ENCODE measurements at regions of chrX and their contacts with region 1.

Region 1: GRCh38 chrX:138745196-138745595 is 33.7 kb upstream of the FGF13 start:
- DNase-seq: peak; percentile 36
- H3K4me3 ChIP-seq: no peak overlapping the region
- H3K27ac ChIP-seq: no peak overlapping the region
- H3K4me1 ChIP-seq: no peaks in the 10 kb centered on the region
- H3K27me3 ChIP-seq: no peaks in the 10 kb centered on the region
- CTCF ChIP-seq: peak; percentile 68 to 77

Region 2: DNA sequence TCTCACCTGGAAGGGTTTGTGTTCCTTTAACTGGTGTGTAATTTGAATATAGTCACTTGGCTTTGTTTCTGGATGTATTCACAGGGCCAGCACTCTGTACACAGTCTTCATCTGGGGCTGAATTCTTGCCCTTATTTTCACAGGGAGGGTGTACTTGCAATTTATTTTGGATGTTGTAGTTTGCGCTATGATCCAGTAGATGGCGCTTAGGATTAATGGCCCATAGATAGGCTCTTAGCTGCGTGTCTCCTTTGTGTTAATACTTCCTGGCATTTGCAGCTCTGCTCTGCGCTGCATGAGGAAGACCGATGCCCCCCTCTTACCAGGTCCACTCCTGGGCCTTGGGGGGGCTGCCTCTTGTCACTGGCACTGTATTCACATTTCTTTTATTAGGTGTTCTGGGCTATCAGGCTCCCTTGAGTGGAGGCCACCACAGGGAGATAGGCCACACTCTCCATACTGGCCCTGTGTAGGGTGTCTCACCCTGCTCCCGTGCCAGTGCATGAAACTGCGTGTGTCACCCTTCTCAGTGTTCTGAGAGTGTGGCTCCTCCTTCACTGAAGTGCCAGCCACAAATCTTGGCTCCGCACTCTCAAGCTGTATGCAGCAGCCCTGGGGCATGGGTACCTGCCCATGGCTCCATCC is 617.0 kb before region 1 on chrX:
- CTCF ChIA-PET with region 1: no interaction called
- dilution Hi-C with region 1: no loop called
- in situ Hi-C with region 1: no loop called
- intact Hi-C with region 1: loop called (anchors 1 kb)
- DNase-seq: peak; percentile 21
- H3K4me3 ChIP-seq: no peak overlapping the region
- H3K27ac ChIP-seq: no peak overlapping the region
- H3K4me1 ChIP-seq: no peaks in the 10 kb centered on the region
- H3K27me3 ChIP-seq: no peaks in the 10 kb centered on the region
- CTCF ChIP-seq: peak; percentile 60 to 69

Region 3: GRCh38 chrX:138191998-138192397 is 553.2 kb before region 1 on chrX:
- CTCF ChIA-PET with region 1: no interaction called
- dilution Hi-C with region 1: no loop called
- in situ Hi-C with region 1: loop called (anchors 10 to 25 kb)
- intact Hi-C with region 1: loop called (anchors 1 kb)
- DNase-seq: peak; percentile 5
- H3K4me3 ChIP-seq: no peak overlapping the region
- H3K27ac ChIP-seq: no peak overlapping the region
- H3K4me1 ChIP-seq: no peaks in the 10 kb centered on the region
- H3K27me3 ChIP-seq: no peaks in the 10 kb centered on the region
- CTCF ChIP-seq: peak; percentile 31 to 63

Measured in mammary epithelial cell (primary cell).